ENCODE measurements at regions of chr10 and their contacts with region 1.

Region 1: DNA sequence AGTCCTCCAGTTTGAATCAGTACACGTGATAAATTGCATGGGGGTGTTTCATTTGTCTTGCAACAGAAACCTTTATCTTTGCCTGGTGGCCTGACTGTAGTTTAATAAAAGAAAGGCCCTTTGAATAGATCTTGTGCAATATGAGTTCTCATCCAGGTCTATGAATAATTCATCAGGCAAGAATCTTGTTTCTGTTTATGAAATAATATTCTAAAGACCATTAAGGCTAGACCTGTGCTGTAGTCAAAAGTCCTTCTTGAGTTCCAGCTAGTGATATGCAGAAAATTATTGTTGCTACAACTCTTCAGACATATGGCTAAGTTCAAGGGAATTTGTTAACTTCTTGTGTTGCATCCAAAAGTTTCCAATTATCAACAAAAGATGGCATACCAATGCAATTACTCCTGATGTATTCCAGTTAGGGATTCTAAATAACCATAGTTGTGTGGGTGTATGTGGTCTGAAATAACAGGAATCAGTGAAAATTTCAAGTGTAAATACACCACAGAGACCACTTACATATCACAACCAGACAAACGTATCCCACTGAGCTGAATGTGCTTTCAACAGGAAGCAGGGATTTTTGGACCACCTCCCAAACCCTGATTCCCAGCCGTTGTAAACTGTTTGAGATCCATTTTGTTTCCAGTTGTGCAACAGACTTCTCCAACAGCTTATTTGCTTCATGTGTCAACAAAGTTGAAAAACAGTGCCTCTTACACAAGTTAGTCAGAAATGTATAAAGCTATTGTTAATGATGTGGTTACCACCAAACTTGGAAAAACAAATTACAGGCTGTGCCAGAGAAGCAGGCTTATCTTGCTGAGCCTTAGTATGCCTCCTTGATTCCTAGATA is 54.7 kb upstream of the BICC1 start:
- DNase-seq: no peak
- ATAC-seq: peak; percentile 87

Region 2: GRCh38 chr10:57992321-57993077 is 465.5 kb before region 1 on chr10:
- intact Hi-C with region 1: no loop called
- DNase-seq: no peak
- ATAC-seq: no peak

Region 3: DNA sequence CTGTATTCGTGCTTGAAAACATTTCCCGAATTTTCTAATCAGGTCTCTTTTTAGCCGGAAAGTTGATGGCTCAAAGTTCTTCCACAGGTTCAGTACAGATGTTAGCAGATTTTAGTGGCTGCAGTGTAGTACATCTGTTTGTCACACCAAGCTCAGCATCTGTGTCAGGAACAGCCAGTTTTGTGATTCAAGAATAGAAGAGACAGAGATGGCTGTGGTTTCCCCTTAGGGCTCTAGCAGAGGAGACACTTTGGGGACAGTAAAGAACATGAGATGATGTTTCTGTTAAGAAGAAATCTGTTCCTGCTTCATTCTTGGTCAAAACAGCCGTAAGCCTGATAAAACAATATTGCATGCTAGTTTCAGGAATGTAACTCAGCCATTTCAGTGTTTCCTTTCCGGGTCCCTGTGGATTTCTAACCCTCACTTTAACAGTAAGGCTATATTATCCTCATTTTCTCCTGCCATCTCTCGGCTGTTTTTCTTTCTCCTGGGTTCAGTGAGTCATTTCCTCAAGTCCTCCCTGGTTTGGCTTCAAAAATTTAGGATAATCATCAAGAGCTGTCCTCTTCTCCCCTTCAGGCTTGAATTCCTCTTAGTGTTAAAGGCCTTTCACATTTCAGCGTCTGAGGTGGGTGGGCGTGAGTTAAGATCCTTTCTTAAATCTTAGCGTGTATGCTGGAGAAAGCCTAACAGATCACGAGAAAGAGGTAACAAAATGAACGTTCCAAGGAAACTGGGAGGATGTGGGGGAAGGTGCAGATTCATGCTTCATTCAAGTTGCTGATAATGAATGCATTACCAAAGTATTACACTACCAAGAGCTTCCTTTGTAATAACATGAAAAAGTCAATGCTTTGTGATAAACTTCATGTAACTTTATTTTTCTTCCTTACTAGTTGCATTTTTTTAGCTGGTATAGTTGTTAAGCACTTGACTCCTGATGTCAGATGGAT is 17.6 kb after region 1 on chr10:
- intact Hi-C with region 1: loop called (anchors 2 kb)
- DNase-seq: no peak
- ATAC-seq: peak; percentile 66

Region 4: GRCh38 chr10:58631715-58632114 is 173.7 kb after region 1 on chr10:
- intact Hi-C with region 1: no loop called
- DNase-seq: no peak
- ATAC-seq: peak; percentile 57